ENCODE measurements at regions of chr1 and their contacts with region 1.

Region 1: GRCh38 chr1:107362468-107363140 is 221.8 kb downstream of the NTNG1 start:
- DNase-seq: peak; percentile 31
- H3K4me3 ChIP-seq: peak overlapping the region; percentile 5
- H3K27ac ChIP-seq: peak overlapping the region; percentile 34
- H3K4me1 ChIP-seq: peaks cover 57% of the 10 kb centered on the region
- CTCF ChIP-seq: no peak

Region 2: GRCh38 chr1:107142140-107142542 is 220.5 kb before region 1 on chr1:
- CTCF ChIA-PET with region 1: no interaction called
- POLR2A ChIA-PET with region 1: interaction called, 7 read pairs
- intact Hi-C with region 1: loop called (anchors 5 kb)
- DNase-seq: peak; percentile 68
- H3K4me3 ChIP-seq: peak overlapping the region; percentile 78
- H3K27ac ChIP-seq: no peak overlapping the region
- H3K4me1 ChIP-seq: peaks cover 16% of the 10 kb centered on the region
- CTCF ChIP-seq: peak; percentile 93

Region 3: DNA sequence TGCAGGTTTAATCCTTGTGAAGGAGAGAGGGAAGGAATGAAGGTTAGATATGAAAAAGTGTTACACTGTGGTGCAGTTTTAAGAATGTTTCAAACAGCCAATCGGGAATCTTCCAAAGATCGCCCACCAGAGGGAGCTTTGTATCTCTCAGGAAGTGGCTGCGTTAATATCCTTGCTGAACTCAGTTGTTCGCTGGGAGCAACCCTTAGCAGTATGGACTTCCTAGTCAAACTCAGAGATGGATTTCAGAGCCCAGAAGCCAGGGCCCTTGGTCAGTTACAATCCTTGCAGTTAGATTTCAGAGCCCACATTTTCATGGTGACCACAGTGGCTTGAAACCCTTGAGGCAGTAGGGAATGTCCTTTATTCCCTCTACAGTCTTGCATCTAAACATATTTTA is 85.6 kb before region 1 on chr1:
- CTCF ChIA-PET with region 1: interaction called, 3 read pairs
- POLR2A ChIA-PET with region 1: interaction called, 5 read pairs
- intact Hi-C with region 1: loop called (anchors 1 kb)
- DNase-seq: peak; percentile 83
- H3K4me3 ChIP-seq: no peak overlapping the region
- H3K27ac ChIP-seq: no peak overlapping the region
- H3K4me1 ChIP-seq: peaks cover 19% of the 10 kb centered on the region
- CTCF ChIP-seq: peak; percentile 92

Region 4: GRCh38 chr1:107378527-107379270 is 16.1 kb after region 1 on chr1:
- CTCF ChIA-PET with region 1: interaction called, 4 read pairs
- POLR2A ChIA-PET with region 1: interaction called, 22 read pairs
- intact Hi-C with region 1: no loop called
- DNase-seq: no peak
- H3K4me3 ChIP-seq: no peak overlapping the region
- H3K27ac ChIP-seq: no peak overlapping the region
- H3K4me1 ChIP-seq: peaks cover 9% of the 10 kb centered on the region
- CTCF ChIP-seq: no peak

Region 5: GRCh38 chr1:107430540-107431228 is 68.1 kb after region 1 on chr1:
- CTCF ChIA-PET with region 1: no interaction called
- POLR2A ChIA-PET with region 1: interaction called, 3 read pairs
- intact Hi-C with region 1: loop called (anchors 5 kb)
- DNase-seq: peak; percentile 70
- H3K4me3 ChIP-seq: no peak overlapping the region
- H3K27ac ChIP-seq: no peak overlapping the region
- H3K4me1 ChIP-seq: peaks cover 39% of the 10 kb centered on the region
- CTCF ChIP-seq: peak; percentile 92

Region 6: DNA sequence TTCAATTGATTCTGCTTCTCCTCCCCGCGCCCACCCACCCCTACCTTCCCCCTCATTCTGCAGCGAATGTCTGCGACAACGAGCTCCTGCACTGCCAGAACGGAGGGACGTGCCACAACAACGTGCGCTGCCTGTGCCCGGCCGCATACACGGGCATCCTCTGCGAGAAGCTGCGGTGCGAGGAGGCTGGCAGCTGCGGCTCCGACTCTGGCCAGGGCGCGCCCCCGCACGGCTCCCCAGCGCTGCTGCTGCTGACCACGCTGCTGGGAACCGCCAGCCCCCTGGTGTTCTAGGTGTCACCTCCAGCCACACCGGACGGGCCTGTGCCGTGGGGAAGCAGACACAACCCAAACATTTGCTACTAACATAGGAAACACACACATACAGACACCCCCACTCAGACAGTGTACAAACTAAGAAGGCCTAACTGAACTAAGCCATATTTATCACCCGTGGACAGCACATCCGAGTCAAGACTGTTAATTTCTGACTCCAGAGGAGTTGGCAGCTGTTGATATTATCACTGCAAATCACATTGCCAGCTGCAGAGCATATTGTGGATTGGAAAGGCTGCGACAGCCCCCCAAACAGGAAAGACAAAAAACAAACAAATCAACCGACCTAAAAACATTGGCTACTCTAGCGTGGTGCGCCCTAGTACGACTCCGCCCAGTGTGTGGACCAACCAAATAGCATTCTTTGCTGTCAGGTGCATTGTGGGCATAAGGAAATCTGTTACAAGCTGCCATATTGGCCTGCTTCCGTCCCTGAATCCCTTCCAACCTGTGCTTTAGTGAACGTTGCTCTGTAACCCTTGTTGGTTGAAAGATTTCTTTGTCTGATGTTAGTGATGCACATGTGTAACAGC is 118.2 kb after region 1 on chr1:
- CTCF ChIA-PET with region 1: no interaction called
- POLR2A ChIA-PET with region 1: no interaction called
- intact Hi-C with region 1: no loop called
- DNase-seq: peak; percentile 11
- H3K4me3 ChIP-seq: no peak overlapping the region
- H3K27ac ChIP-seq: no peak overlapping the region
- H3K4me1 ChIP-seq: no peaks in the 10 kb centered on the region
- CTCF ChIP-seq: no peak

Region 7: DNA sequence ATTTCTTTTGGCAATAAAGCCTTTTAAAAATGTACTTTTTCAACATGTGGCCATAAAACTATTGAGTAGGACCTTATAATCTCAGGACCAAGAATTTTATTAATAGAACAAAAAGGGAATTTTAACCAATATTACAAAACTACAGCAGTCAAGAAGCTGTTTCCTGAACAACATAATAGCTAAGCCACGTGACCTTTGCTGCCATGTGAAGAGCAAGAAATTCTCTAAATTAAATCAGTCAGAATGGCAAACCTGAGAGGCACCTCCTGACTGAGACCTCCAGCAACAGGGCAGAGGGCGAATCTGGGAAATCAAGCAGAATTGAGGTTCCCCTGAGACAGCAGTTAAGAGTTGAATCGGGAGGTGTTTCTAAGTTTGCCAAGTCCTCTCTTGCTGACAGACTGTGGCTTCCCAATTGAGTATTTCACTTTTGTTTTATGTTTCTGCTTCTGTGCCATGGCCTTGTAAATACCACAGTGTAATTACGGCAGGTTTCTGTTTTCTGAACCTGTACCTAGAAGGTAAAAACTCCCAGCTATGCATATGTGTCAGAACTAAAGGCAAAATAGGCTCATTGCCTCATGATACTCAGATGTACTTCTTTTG is 136.6 kb after region 1 on chr1:
- CTCF ChIA-PET with region 1: no interaction called
- POLR2A ChIA-PET with region 1: no interaction called
- intact Hi-C with region 1: no loop called
- DNase-seq: no peak
- H3K4me3 ChIP-seq: no peak overlapping the region
- H3K27ac ChIP-seq: no peak overlapping the region
- H3K4me1 ChIP-seq: peaks cover 8% of the 10 kb centered on the region
- CTCF ChIP-seq: no peak